Body of pancreas (tissue), 4 donors: ENCODE measurements at regions of chr5 and their contacts with region 1.

Region 1: DNA sequence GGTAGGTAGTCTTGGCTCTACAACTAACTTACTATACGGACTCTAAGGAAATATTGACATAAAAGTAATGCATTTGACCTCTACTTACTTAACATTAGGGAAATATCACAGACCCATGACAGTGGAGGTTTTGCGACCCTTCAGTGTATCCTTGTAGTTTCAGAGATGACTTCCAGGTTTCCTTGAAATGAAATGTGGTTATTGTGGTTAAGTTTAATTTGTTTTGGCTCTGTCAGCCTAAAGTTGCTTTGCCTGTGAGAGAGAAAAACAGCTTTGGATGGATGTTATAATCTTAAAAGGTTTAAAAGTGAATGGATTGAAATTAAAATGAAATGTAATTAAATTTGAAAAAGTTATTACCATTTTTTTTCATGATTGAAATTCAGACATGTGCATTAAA is 42.9 kb downstream of the LRRTM2 start:
- DNase-seq: no peak
- ATAC-seq: no peak
- H3K4me3 ChIP-seq: no peak overlapping the region
- H3K27ac ChIP-seq: no peak overlapping the region
- H3K4me1 ChIP-seq: no peaks in the 10 kb centered on the region
- H3K27me3 ChIP-seq: no peaks in the 10 kb centered on the region
- CTCF ChIP-seq: no peak
- POLR2A ChIP-seq: no peak

Region 2: DNA sequence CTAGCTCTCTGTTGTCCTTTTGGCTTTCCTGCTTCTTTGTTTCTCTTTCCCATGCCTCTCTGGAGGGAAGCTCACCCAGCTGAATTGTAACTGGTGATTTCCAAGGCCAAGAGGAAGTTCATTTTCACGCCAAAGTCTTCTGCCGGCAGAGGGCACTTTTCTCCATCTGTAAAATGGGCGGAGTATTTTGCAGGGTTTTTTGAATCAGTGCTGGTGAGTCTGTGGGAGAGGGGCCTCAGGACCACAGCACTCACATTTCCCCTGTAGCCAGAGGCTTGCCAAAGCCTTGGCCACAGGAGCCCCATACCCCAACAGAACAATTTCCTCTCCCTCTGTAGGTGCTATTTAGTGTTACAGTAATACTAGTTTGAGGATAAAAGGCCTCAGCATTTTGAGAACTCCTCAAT is 419.1 kb after region 1 on chr5:
- intact Hi-C with region 1: loop called (anchors 10 kb)
- DNase-seq: no peak
- ATAC-seq: no peak
- H3K4me3 ChIP-seq: no peak overlapping the region
- H3K27ac ChIP-seq: no peak overlapping the region
- H3K4me1 ChIP-seq: no peaks in the 10 kb centered on the region
- H3K27me3 ChIP-seq: no peaks in the 10 kb centered on the region
- CTCF ChIP-seq: peak in 3 of 7 experiments; percentile 7 to 21 (median 10)
- POLR2A ChIP-seq: no peak